Ovary (tissue), 10 donors: ENCODE measurements at regions of chr4 and their contacts with region 1.

Region 1: DNA sequence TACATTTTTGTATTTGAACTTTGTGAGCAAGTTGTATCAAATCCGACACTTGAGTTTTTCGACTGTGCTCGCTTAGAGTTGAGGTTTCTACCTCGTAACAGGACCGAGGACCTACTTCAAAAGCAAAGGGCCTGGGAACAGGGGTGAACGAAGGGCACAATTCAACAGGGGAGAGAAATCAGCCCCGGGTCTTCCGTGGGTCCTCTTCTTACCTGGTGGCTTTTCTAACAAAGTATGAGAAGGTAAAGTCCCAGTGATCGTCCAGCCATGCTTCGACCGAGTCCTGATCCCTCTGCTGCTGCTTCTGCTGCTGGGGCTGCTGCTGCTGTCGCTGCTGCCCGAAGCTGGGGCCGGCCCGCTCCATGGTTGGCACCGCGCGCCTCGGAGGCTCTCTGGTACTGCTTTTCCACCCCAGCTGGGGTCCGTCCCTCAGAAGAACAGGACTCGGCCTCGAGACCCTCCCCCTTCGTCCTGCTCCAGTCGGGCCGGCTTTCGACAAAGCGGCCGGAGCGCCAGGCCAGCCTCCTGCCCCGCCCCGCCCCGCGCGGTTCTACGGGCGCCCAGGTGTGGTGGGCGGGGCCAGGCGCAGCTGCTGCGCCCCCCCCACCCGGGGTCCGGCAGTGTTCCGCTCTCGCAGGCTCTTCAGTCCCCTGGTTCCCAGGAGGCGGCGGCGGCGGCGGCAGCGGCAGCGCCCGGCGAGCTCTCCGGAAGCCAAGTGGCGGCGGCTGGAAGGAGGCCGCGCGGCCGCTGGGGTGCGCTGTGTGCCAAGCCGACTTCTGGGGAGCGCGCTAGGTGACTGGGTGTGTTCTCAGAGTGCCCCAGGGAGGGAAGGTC is at the start of gene PDE5A:
- DNase-seq: peak; percentile 56 to 82 (median 74)
- H3K4me3 ChIP-seq: peak within 1 kb of the TSS; percentile 70
- H3K27ac ChIP-seq: peak within 1 kb of the TSS; percentile 42 to 76
- H3K4me1 ChIP-seq: peaks cover 2% of the 10 kb centered on the region
- H3K27me3 ChIP-seq: no peaks in the 10 kb centered on the region
- CTCF ChIP-seq: peak; percentile 50 to 69 (median 69)
- EP300 ChIP-seq: no peak
- POLR2A ChIP-seq: no peak
- total RNA-seq, gene PDE5A: 4.6 to 19.2 (median 9.7) TPM

Region 2: GRCh38 chr4:119118397-119118796 is 510.1 kb before region 1 on chr4:
- intact Hi-C with region 1: no loop called
- DNase-seq: no peak
- H3K4me3 ChIP-seq: no peak overlapping the region
- H3K27ac ChIP-seq: no peak overlapping the region
- H3K4me1 ChIP-seq: no peaks in the 10 kb centered on the region
- H3K27me3 ChIP-seq: no peaks in the 10 kb centered on the region
- CTCF ChIP-seq: no peak
- EP300 ChIP-seq: no peak
- POLR2A ChIP-seq: no peak

Region 3: DNA sequence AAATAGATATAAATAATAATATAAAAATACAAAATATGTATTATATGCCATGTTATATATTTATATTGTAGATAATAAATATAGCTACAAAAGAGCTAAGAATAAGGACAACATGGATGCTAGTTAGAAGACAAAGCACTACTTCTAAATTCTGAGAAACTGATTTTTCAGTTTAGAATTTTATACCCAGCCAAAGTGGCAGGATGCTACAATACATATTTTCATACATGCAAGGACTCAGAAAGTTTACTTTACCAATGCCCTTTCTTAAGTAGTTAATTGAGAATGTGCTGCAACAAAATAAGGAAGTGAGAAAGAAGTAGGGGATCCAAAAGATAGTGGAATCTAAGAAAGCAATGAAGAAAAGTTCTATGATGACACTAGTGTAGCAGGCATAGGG is 64.4 kb before region 1 on chr4:
- intact Hi-C with region 1: loop called in 1 of 4 experiments (anchors 10 kb)
- DNase-seq: no peak
- H3K4me3 ChIP-seq: no peak overlapping the region
- H3K27ac ChIP-seq: no peak overlapping the region
- H3K4me1 ChIP-seq: no peaks in the 10 kb centered on the region
- H3K27me3 ChIP-seq: no peaks in the 10 kb centered on the region
- CTCF ChIP-seq: no peak
- EP300 ChIP-seq: no peak
- POLR2A ChIP-seq: no peak

Region 4: GRCh38 chr4:120049732-120050494 is 421.4 kb after region 1 on chr4:
- intact Hi-C with region 1: loop called in 2 of 4 experiments (anchors 2 to 10 kb)
- DNase-seq: peak; percentile 56 to 80 (median 68)
- H3K4me3 ChIP-seq: peak overlapping the region; percentile 21
- H3K27ac ChIP-seq: no peak overlapping the region
- H3K4me1 ChIP-seq: no peaks in the 10 kb centered on the region
- H3K27me3 ChIP-seq: no peaks in the 10 kb centered on the region
- CTCF ChIP-seq: peak; percentile 54 to 85 (median 75)
- EP300 ChIP-seq: no peak
- POLR2A ChIP-seq: no peak

Region 5: GRCh38 chr4:120062663-120063195 is 434.2 kb after region 1 on chr4:
- intact Hi-C with region 1: loop called in 1 of 4 experiments (anchors 5 kb)
- DNase-seq: no peak
- H3K4me3 ChIP-seq: no peak overlapping the region
- H3K27ac ChIP-seq: no peak overlapping the region
- H3K4me1 ChIP-seq: peaks cover under 1% of the 10 kb centered on the region
- H3K27me3 ChIP-seq: no peaks in the 10 kb centered on the region
- CTCF ChIP-seq: no peak
- EP300 ChIP-seq: no peak
- POLR2A ChIP-seq: no peak